HEK293 (cell line): ENCODE measurements at regions of chr11 and their contacts with region 1.

Region 1: DNA sequence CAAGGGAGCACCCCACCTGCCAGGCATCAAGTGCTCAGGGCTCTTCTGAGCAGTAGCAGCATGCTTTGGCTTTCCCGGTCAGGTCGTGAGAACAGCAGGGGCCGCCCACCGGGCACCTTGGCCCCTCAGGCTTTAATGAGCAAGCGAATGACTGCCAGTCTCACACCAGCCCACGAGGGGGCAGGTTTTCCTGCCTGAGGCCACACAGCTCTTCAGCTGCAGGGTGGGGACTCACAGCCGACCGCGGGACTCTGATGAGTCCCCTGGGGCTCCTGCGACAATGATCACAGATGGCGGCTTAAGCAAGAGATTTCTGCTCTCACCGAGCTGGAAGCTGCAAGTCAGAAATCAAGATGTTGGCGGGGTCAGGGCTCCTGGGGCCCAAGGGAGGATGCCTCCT is 14.3 kb upstream of the FGF19 start:
- H3K4me3 ChIP-seq: no peak overlapping the region
- H3K27ac ChIP-seq: no peak overlapping the region
- H3K4me1 ChIP-seq: no peaks in the 10 kb centered on the region
- CTCF ChIP-seq: peak; percentile 67

Region 2: DNA sequence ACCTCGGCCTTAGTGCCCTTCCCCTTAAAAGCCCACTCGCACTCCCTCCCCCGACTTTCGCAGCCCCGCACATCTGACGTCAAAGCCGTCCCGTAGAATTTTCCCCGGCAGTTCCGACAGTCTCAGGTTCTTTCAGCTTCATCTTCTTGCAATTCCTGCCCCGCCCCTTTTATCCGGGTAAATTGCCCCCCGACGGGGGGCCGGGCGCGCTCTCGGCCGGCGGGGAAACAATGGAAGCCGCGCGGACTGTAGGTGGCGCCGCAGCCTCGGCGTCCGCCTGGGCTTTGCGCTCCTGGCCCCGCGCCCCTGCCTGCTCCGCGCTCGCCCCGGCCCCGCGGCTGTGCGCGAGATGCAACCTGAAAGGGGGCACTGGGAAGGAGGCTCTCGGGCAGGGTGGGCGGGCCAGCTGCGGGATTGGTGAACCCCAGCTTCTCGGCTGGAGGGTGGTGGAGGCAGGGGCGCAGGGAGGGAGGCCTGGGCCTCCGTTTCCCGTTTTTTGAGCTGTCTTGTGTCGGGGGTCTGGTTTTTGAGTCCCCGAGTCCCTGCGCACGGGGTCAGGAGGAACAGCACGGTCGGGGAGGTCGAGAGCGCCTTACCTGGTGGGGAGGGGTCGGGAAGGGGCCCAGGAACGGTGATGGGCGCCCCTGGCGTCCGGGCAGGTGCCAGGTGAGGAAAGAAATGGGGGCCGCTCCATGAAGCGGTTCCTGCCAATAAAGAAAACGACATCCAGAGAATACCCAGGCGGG is 13.5 kb before region 1 on chr11:
- CTCF ChIA-PET with region 1: interaction called, 14 read pairs
- POLR2A ChIA-PET with region 1: no interaction called
- H3K4me3 ChIP-seq: peak overlapping the region; percentile 30
- H3K27ac ChIP-seq: no peak overlapping the region
- H3K4me1 ChIP-seq: 0 out of 2 replicates have a peak, but pooled peaks cover 6% of the 10 kb centered on the region
- CTCF ChIP-seq: no peak; the same call in 1 of the 2 replicates